Endothelial cell of umbilical vein (primary cell): ENCODE measurements at regions of chr6 and their contacts with region 1.

Region 1: DNA sequence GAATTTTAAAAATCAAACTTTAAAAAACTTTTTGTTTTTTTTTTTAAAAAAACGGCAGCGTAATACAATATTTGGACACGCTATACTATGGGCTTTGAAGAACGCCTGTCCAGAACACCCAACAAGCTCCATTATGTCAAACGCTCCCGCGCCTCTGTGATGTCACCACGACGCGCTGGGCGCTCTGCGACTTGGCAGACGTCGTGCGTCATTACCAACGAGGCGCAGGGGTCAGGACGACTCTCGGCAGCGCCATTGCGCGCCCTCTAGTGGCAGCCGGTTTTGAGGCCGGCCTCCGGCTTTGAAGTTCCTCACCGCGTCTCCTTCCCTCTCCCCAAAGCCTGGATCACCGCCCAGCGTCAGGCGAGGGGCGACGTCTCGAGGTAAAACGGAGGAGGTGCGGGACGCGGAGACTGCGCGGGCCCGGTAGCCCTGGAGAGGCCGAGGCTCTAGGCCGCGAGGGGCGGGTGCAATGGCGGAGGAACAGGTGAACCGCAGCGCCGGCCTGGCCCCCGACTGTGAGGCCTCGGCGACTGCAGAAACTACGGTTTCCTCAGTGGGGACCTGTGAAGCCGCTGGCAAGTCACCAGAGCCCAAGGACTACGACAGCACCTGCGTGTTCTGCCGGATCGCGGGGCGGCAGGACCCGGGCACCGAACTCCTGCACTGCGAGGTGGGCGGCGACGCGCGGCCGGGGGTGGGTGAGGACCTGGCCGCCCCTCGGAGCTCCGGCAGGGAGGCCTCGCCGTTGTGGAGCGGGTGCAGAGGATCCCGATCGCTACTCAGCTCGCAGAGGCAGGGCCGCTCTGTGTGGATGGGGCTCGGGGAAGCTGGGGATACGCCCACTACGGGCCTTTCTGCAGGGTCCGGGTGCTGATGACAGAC is at the start of gene HINT3:
- DNase-seq: peak; percentile 97
- H3K4me3 ChIP-seq: peak within 1 kb of the TSS; percentile 46 to 74 (median 58)
- H3K27ac ChIP-seq: peak within 1 kb of the TSS; percentile 47
- H3K4me1 ChIP-seq: peaks cover 15% of the 10 kb centered on the region
- H3K27me3 ChIP-seq: no peaks in the 10 kb centered on the region
- CTCF ChIP-seq: peak; percentile 99
- POLR2A ChIP-seq: peak; percentile 52
- total RNA-seq, gene HINT3: 8.4 and 9.7 TPM in 2 replicates

Region 2: DNA sequence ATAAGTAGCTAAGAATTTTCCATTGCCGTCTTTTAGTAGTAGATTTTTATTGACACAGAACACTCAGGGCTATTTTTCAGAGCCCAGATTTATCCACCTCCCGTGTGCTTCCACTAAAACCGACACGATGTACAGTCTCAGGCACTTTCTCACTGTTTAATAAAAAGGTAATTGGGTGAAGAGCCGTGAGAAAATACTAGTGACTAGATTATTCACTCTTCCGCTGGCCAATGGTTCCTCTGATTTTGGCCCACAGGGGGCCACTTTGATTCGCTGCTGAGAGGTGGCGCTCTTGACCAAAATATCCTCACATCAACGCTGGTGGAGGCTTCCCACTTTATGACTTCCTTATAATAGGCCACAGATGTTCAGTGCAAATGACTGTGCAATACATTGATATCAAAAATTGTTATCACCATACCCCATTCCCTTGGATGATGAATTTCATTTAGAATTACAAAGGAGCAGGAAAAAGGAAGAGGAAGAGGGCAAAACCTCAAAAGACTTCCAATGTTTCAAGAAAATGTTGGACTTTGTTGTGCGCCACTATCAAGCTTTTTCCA is 642.6 kb before region 1 on chr6:
- CTCF ChIA-PET with region 1: interaction called, 4 read pairs
- POLR2A ChIA-PET with region 1: no interaction called
- dilution Hi-C with region 1: no loop called
- intact Hi-C with region 1: loop called (anchors 5 kb)
- DNase-seq: peak; percentile 62
- H3K4me3 ChIP-seq: no peak overlapping the region
- H3K27ac ChIP-seq: no peak overlapping the region
- H3K4me1 ChIP-seq: no peaks in the 10 kb centered on the region
- H3K27me3 ChIP-seq: peaks cover under 1 to 15% of the 10 kb centered on the region in 2 experiments
- CTCF ChIP-seq: peak; percentile 76 to 81
- POLR2A ChIP-seq: no peak

Region 3: DNA sequence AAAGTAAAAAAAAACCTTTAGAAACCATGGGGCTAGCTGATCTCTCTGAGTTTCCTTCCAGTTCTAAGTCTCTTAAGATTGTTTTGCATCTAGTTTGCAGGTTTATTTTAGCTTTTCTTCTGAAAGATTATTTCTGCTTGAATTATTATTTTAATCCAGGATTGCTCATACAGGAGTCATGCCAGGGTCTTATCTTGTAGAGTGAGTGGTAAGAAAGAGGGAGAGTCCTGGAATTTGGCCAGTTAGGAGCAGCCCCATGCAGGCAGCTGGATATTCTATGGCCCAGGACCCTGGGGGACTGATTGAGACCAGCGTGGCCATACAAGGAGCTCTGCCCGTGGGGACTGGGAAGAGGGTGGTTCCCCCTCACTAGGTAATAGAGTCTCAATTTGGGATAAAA is 386.2 kb before region 1 on chr6:
- CTCF ChIA-PET with region 1: no interaction called
- POLR2A ChIA-PET with region 1: no interaction called
- dilution Hi-C with region 1: no loop called
- intact Hi-C with region 1: no loop called
- DNase-seq: no peak
- H3K4me3 ChIP-seq: no peak overlapping the region
- H3K27ac ChIP-seq: no peak overlapping the region
- H3K4me1 ChIP-seq: no peaks in the 10 kb centered on the region
- H3K27me3 ChIP-seq: peaks cover 5 to 22% of the 10 kb centered on the region in 2 experiments
- CTCF ChIP-seq: no peak
- POLR2A ChIP-seq: no peak

Region 4: GRCh38 chr6:125834348-125834747 is 122.4 kb before region 1 on chr6:
- CTCF ChIA-PET with region 1: interaction called, 8 read pairs
- POLR2A ChIA-PET with region 1: no interaction called
- dilution Hi-C with region 1: no loop called
- intact Hi-C with region 1: loop called (anchors 1 kb)
- DNase-seq: peak; percentile 50
- H3K4me3 ChIP-seq: no peak overlapping the region
- H3K27ac ChIP-seq: no peak overlapping the region
- H3K4me1 ChIP-seq: peaks cover 28% of the 10 kb centered on the region
- H3K27me3 ChIP-seq: no peaks in the 10 kb centered on the region
- CTCF ChIP-seq: no peak
- POLR2A ChIP-seq: no peak

Region 5: DNA sequence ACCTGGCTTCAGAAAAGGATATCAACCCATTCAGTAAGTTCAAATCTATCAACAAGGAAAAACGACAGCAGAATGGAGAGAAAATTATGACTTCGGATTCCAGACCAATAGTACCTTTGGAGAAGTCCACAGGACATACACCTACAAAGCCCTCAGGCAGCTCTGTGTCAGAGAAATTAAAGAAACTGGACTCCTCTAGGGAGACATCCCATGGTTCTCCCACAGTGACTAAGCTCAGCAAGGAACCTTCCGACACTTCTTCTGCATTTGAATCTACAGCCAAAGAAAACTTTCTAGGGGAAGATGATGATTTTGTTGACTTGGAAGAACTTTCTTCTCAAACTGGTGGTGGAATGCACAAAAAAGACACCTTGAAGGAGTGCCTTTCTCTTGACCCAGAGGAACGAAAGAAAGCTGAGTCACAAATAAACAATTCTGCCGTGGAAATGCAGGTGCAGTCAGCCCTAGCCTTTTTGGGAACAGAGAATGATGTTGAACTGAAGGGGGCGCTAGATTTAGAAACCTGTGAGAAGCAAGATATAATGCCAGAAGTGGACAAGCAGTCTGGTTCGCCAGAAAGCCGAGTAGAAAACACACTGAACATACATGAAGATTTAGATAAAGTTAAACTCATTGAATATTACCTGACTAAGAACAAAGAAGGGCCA is 67.6 kb before region 1 on chr6:
- CTCF ChIA-PET with region 1: interaction called, 24 read pairs
- POLR2A ChIA-PET with region 1: no interaction called
- dilution Hi-C with region 1: no loop called
- intact Hi-C with region 1: loop called (anchors 1 kb)
- DNase-seq: peak; percentile 71
- H3K4me3 ChIP-seq: no peak overlapping the region
- H3K27ac ChIP-seq: no peak overlapping the region
- H3K4me1 ChIP-seq: no peaks in the 10 kb centered on the region
- H3K27me3 ChIP-seq: no peaks in the 10 kb centered on the region
- CTCF ChIP-seq: peak; percentile 40 to 49
- POLR2A ChIP-seq: no peak

Region 6: DNA sequence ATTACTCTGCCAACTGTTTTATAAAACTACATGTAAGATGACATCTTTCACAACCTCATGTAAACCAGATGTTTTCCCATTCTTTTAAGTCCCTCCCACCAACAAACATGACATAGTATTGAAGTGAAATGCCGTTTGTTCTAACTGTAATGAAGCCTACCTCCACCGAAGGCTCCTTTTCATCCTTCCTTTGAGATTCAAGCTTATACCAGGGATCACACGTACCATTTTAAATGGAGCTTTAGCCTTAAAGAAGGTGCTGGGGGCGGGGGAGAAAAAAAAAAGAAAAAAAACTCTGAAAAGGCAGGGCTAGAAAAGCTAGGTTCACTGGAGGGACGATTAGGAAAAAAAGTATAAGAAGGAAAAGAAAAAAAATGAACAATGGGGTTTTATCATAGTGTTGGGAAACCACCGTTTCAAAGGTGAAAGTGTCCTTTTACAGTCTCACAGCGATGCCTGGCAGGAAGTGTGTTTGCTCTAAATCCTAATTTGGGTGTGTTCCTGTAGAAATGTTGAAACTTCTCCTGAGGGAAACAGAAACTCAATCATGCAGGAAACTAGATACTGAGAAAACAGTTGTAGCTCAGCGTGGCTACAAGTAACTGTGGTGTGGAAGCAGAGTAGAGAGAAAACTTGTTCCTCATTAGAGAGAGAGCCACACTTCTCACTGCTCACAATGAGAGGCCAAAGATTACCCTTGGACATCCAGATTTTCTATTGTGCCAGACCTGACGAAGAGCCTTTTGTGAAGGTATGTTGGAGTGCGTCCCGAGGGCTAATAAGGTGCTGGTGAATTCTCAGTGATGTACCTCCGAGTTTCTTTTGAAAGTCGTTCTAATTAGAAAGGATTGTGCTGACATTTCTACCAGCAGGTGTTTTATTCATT is 37.8 kb before region 1 on chr6:
- CTCF ChIA-PET with region 1: interaction called, 23 read pairs
- POLR2A ChIA-PET with region 1: no interaction called
- dilution Hi-C with region 1: no loop called
- intact Hi-C with region 1: no loop called
- DNase-seq: peak; percentile 91
- H3K4me3 ChIP-seq: peak overlapping the region in 1 of 3 experiments; percentile 2
- H3K27ac ChIP-seq: peak overlapping the region; percentile 21
- H3K4me1 ChIP-seq: peaks cover 18% of the 10 kb centered on the region
- H3K27me3 ChIP-seq: no peaks in the 10 kb centered on the region
- CTCF ChIP-seq: no peak
- POLR2A ChIP-seq: no peak

Region 7: GRCh38 chr6:125974214-125974866 is 17.6 kb after region 1 on chr6:
- CTCF ChIA-PET with region 1: interaction called, 40 read pairs
- POLR2A ChIA-PET with region 1: no interaction called
- dilution Hi-C with region 1: no loop called
- intact Hi-C with region 1: no loop called
- DNase-seq: peak; percentile 73
- H3K4me3 ChIP-seq: no peak overlapping the region
- H3K27ac ChIP-seq: no peak overlapping the region
- H3K4me1 ChIP-seq: no peaks in the 10 kb centered on the region
- H3K27me3 ChIP-seq: no peaks in the 10 kb centered on the region
- CTCF ChIP-seq: peak; percentile 19 to 33
- POLR2A ChIP-seq: no peak